ENCODE measurements at regions of chr4 and their contacts with region 1.

Region 1: DNA sequence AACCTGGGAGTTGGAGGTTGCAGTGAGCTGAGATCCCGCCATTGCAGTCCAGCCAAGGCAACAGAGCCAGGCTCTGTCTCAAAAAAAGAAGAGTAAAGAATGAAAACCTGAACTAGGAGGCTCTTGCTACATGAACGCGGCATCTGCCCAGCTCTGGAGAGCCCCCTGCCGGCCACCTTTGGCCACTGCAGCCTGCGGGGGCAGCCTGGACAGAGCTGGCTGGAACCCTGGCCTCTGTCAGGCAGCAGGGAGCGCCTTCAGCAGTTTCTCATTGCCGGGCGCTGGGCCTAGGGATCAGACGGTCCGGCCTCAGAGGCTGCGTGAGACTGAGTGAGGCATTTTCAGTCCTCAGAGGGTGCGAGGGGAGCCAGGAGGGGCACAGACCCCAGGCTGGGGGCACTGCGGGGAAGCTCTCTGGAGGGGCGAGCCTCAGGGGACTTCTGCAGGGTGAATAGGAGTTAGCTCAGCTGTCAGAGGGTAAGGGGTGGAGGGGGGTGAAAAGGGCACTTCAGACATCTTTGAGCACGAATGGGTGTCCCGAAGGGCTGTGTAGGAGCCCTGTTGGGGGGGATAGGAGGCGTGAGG is 17.5 kb downstream of the DOK7 start:
- DNase-seq: peak; percentile 64
- H3K4me3 ChIP-seq: no peak overlapping the region
- H3K27ac ChIP-seq: no peak overlapping the region
- H3K4me1 ChIP-seq: peaks cover 28% of the 10 kb centered on the region
- H3K27me3 ChIP-seq: no peaks in the 10 kb centered on the region
- CTCF ChIP-seq: peak; percentile 98 to 99

Region 2: DNA sequence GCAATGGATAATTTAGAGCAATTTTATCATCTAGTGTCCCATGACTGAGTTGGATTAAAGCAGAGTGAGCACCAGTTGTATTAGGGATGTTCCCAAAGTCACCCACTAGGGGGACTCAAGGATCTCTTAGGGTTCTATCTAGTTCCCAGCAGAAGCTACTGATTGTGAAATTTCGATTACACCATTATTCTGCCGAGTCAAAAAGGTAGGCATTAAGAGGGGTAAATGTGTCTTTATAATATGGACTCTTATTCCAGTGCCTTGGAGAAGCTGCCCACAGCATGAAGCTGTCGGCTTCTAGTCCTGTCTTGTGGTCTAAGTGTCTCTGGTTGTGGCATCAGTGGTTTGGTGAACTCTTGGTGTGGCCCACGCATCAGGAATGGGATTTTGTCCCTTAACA is 134.5 kb before region 1 on chr4:
- CTCF ChIA-PET with region 1: no interaction called
- dilution Hi-C with region 1: no loop called
- in situ Hi-C with region 1: no loop called
- intact Hi-C with region 1: loop called (anchors 1 kb)
- DNase-seq: peak; percentile 66
- H3K4me3 ChIP-seq: no peak overlapping the region
- H3K27ac ChIP-seq: no peak overlapping the region
- H3K4me1 ChIP-seq: no peaks in the 10 kb centered on the region
- H3K27me3 ChIP-seq: no peaks in the 10 kb centered on the region
- CTCF ChIP-seq: peak; percentile 79 to 92

Region 3: DNA sequence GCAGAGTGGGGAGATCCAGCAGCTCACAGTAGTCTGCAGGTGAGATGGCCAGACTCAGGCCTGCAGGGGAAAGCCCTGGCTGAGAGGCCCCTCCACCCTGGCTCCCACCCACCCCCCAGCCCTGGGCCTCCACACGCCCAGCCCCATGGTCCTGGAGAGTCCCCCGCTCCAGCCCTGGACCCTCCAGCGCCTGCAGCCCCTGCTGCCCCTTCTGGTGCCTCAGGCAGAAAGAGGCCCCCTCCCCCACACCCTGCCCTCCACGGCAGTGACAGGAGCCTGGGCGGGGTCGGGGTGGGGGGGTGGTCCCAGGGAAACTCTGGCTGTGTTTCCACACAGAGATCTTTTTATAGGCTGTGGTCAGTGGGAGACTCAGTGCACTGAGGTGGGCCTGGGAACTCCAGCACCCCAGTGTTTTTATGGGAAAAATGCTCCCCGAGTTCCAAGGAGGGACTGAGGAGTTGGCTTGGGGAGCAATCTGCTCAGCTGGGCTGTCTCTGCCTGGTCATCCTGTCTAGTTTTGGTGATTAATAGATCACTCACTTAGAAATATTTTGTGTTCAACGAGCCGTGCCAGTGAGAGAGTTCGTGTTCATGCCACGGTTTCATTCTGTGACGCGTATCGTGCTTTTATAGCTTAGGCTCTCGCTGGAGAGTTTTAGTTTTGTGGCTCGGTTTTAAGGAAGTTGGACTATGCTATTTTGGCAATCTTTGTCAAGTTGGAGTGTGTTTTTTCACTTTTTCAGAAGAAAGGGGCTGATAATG is 92.0 kb before region 1 on chr4:
- CTCF ChIA-PET with region 1: no interaction called
- dilution Hi-C with region 1: no loop called
- in situ Hi-C with region 1: no loop called
- intact Hi-C with region 1: loop called (anchors 2 kb)
- DNase-seq: peak; percentile 84
- H3K4me3 ChIP-seq: peak overlapping the region; percentile 73 to 85 (median 81)
- H3K27ac ChIP-seq: peak overlapping the region; percentile 83
- H3K4me1 ChIP-seq: peaks cover 33% of the 10 kb centered on the region
- H3K27me3 ChIP-seq: no peaks in the 10 kb centered on the region
- CTCF ChIP-seq: no peak

Region 4: GRCh38 chr4:3436798-3437581 is 43.6 kb before region 1 on chr4:
- CTCF ChIA-PET with region 1: no interaction called
- dilution Hi-C with region 1: no loop called
- in situ Hi-C with region 1: no loop called
- intact Hi-C with region 1: loop called (anchors 2 kb)
- DNase-seq: peak; percentile 93
- H3K4me3 ChIP-seq: peak overlapping the region in 1 of 3 experiments; percentile 18
- H3K27ac ChIP-seq: peak overlapping the region; percentile 6
- H3K4me1 ChIP-seq: peaks cover 21% of the 10 kb centered on the region
- H3K27me3 ChIP-seq: no peaks in the 10 kb centered on the region
- CTCF ChIP-seq: no peak

Region 5: GRCh38 chr4:3442959-3443749 is 37.5 kb before region 1 on chr4:
- CTCF ChIA-PET with region 1: no interaction called
- dilution Hi-C with region 1: no loop called
- in situ Hi-C with region 1: no loop called
- intact Hi-C with region 1: loop called (anchors 2 kb)
- DNase-seq: peak; percentile 32
- H3K4me3 ChIP-seq: no peak overlapping the region
- H3K27ac ChIP-seq: no peak overlapping the region
- H3K4me1 ChIP-seq: no peaks in the 10 kb centered on the region
- H3K27me3 ChIP-seq: no peaks in the 10 kb centered on the region
- CTCF ChIP-seq: peak; percentile 94 to 95

Region 6: DNA sequence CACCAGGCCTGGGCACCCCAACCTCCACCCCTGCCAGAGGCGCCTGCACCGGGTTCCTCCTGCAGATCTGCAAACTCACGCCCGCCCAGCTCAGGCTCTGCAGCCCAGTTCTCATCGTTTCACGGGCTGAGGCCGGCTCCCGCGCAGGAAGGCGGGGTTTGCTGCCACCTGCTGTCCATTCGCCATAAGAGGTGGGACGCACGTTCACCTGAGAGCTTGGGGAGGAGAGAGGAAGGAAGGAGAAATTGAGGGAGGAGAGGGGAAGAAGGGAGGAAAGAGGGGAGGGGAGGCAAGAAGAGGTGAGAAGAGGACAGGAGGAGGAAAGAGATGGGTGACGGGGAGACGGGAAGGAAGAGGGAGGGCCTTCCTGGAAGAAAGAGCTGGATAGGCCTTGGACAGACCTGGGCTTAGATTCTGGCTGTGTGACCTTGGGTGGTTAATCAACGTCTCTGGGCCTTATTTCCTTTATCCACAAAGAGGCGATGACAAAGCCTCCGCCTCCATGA is 400.0 kb after region 1 on chr4:
- CTCF ChIA-PET with region 1: interaction called, 7 read pairs
- dilution Hi-C with region 1: no loop called
- in situ Hi-C with region 1: no loop called
- intact Hi-C with region 1: loop called (anchors 5 kb)
- DNase-seq: peak; percentile 50
- H3K4me3 ChIP-seq: no peak overlapping the region
- H3K27ac ChIP-seq: no peak overlapping the region
- H3K4me1 ChIP-seq: no peaks in the 10 kb centered on the region
- H3K27me3 ChIP-seq: peaks cover 13% of the 10 kb centered on the region
- CTCF ChIP-seq: peak; percentile 49 to 75

Region 7: DNA sequence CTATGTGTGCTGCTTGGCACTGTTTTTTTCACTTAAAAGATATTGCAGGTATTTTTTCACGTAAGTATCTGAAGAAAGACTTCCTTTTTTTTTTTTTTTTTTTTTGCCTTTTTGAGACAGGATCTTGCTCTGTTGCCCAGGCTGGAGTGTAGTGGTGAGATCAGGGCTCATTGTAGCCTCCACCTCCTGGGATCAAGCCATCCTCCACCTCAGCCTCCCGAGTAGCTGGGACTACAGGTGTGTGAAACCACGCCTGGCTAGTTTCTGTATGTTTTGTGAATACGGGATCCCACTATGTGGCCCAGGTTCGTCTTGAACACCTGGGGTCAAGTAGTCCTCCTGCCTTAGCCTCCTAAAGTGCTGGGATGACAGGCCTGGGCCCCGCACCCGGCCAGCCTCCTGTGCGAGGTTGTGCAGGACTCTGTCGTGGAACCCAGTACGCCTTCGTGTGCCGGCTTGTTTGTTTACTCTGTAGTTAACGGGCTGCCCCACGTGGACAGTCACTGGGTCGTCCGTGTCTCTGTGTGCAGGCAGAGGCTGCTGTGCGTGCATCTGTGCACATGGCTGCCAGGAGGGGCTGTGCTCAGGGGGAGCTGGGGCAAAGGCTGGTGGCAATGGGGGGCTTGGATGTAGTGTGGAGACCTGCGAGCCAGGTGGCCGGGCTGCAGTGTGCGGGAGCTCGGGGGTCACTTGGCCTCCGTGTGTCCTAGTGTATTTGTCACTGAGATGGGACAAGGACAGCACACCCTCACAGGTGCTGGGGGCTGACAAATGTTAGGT is 465.1 kb after region 1 on chr4:
- CTCF ChIA-PET with region 1: no interaction called
- dilution Hi-C with region 1: no loop called
- in situ Hi-C with region 1: no loop called
- intact Hi-C with region 1: loop called (anchors 1 kb)
- DNase-seq: no peak
- H3K4me3 ChIP-seq: no peak overlapping the region
- H3K27ac ChIP-seq: no peak overlapping the region
- H3K4me1 ChIP-seq: no peaks in the 10 kb centered on the region
- H3K27me3 ChIP-seq: no peaks in the 10 kb centered on the region
- CTCF ChIP-seq: no peak